IMR-90 (cell line): ENCODE measurements at regions of chr5 and their contacts with region 1.

Region 1: GRCh38 chr5:90606539-90606938 is 47.9 kb downstream of the ADGRV1 start:
- DNase-seq: no peak
- ATAC-seq: no peak
- H3K4me3 ChIP-seq: no peak overlapping the region
- H3K27ac ChIP-seq: no peak overlapping the region
- H3K4me1 ChIP-seq: no peaks in the 10 kb centered on the region
- H3K27me3 ChIP-seq: no peaks in the 10 kb centered on the region
- CTCF ChIP-seq: 0 out of 2 replicates have a peak, but pooled peaks have one; percentile 3
- POLR2A ChIP-seq: no peak
- RAD21 ChIP-seq: no peak

Region 2: DNA sequence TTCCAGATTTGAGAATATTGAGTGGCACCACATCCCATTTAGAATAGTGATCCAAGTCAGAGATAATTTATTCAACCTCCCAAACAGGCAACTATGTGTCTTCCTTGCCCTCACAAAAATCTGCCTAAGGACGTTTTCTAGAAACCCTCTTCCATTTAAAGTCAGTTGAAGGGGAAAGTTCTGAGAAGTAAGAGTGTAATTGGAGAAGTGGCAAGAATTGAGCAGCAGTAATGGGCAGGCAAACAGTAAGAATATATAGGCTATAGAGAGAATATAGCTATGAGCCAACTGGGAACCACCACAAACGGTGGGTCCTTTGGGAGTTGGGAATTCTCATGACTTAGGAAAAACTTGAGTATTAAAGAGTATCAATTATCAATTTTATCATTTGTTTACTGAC is 165.9 kb before region 1 on chr5:
- CTCF ChIA-PET with region 1: interaction called, 6 read pairs
- POLR2A ChIA-PET with region 1: no interaction called
- dilution Hi-C with region 1: no loop called
- in situ Hi-C with region 1: no loop called
- intact Hi-C with region 1: loop called (anchors 1 kb)
- DNase-seq: no peak
- ATAC-seq: no peak; the same call in 1 of the 2 replicates
- H3K4me3 ChIP-seq: no peak overlapping the region
- H3K27ac ChIP-seq: no peak overlapping the region
- H3K4me1 ChIP-seq: no peaks in the 10 kb centered on the region
- H3K27me3 ChIP-seq: peaks cover 1% of the 10 kb centered on the region; the same call in 1 of the 2 replicates
- CTCF ChIP-seq: no peak
- POLR2A ChIP-seq: no peak
- RAD21 ChIP-seq: no peak